ENCODE measurements at regions of chr5 and their contacts with region 1.

Region 1: DNA sequence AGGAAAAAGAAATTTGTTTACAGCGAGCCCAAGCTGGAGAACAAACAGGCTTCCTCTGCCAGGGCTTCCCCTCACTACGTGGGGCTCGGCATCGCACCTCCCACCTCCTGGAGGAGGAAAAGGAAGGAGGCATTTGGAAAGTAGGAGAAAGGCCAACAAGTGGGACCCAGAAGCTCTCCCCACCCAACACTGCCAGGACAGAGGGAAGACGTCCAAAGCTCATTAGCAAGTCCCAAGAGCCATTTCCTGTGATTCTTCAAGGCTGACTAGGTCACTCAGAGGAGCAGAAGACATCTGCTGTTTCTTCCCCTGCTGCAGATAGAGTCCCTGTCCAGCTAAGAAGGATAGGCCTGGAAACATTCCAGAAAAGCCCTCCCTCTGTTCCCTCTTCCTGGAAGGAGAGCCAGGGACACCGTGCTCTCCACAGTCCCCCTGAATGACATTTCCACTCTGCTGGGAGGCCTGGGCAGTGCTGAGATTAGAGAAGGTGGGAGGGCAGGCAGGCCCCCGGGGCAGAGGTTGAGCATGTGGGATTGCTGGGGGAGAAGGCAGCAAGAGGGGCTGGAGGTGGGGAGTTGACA is 57.0 kb upstream of the NEURL1B start:
- DNase-seq: peak; percentile 33 to 83 (median 62)
- H3K4me3 ChIP-seq: no peak overlapping the region
- H3K27ac ChIP-seq: peak overlapping the region in 4 of 5 donors; percentile 62 to 86 (median 72)
- H3K4me1 ChIP-seq: peaks cover 0 to 19% of the 10 kb centered on the region in 2 donors
- H3K27me3 ChIP-seq: no peaks in the 10 kb centered on the region
- CTCF ChIP-seq: no peak
- POLR2A ChIP-seq: no peak

Region 2: DNA sequence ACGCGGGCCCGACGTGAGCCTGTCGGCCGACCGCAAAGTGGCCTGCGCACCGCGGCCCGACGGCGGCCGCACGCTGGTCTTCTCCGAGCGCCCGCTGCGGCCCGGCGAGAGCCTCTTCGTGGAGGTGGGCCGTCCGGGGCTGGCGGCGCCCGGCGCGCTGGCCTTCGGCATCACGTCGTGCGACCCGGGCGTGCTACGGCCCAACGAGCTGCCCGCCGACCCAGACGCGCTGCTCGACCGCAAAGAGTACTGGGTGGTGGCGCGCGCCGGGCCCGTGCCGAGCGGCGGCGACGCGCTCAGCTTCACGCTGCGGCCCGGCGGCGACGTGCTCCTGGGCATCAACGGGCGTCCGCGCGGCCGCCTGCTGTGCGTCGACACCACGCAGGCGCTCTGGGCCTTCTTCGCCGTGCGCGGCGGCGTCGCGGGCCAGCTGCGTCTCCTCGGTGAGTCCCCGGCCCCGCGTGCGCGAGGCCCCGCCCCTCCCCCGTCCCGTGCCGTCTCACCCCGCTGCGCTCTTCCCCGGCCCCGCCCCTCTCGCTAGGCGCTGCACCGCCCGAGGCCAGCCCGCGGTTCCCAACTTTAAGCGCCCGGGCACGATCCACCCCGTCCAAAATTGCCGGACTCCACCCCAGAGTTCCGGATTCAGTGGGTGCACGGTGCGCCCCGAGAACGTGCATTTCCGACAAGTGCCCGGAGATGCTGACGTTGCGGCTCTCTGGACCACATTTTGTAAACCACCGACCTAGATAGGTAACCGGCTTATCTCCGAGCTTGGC is 99.9 kb after region 1 on chr5:
- intact Hi-C with region 1: loop called in 1 of 2 experiments (anchors 5 kb)
- DNase-seq: no peak
- H3K4me3 ChIP-seq: no peak overlapping the region
- H3K27ac ChIP-seq: peak overlapping the region in 1 of 5 donors; percentile 14
- H3K4me1 ChIP-seq: peaks cover 0 to 44% of the 10 kb centered on the region in 2 donors
- H3K27me3 ChIP-seq: no peaks in the 10 kb centered on the region
- CTCF ChIP-seq: no peak
- POLR2A ChIP-seq: no peak

Measured in adrenal gland (tissue), 19 donors.